Activated T-helper 1 cell treated with anti-CD3 and anti-CD28 coated beads, Interleukin-12 subunit alpha, Interleukin-12 subunit beta, Interleukin-2, Interleukin-4 antibody, amounts not matched to agents 30 ng/mL and 10 ng/mL and 1 ng/mL, durations not matched to agents 14 hours and 24 hours and 36 hours (primary cell): ENCODE measurements at regions of chr13 and their contacts with region 1.

Region 1: GRCh38 chr13:50081679-50082425 is 66.6 kb downstream of the KCNRG start:
- DNase-seq: peak; percentile 99
- H3K4me3 Mint-ChIP-seq: peak overlapping the region; percentile 97
- H3K27ac Mint-ChIP-seq: peak overlapping the region; percentile 100
- H3K4me1 Mint-ChIP-seq: peaks cover 48% of the 10 kb centered on the region
- H3K27me3 Mint-ChIP-seq: no peaks in the 10 kb centered on the region

Region 2: GRCh38 chr13:49792550-49793324 is 289.1 kb before region 1 on chr13 and contains the start of gene KPNA3:
- intact Hi-C with region 1: loop called (anchors 5 kb)
- DNase-seq: peak; percentile 93
- H3K4me3 Mint-ChIP-seq: peak within 1 kb of the TSS; percentile 96
- H3K27ac Mint-ChIP-seq: peak within 1 kb of the TSS; percentile 97
- H3K4me1 Mint-ChIP-seq: peaks cover 30% of the 10 kb centered on the region
- H3K27me3 Mint-ChIP-seq: peaks cover 6% of the 10 kb centered on the region
- total RNA-seq, gene KPNA3: 54.7 and 55.0 TPM in 2 replicates

Region 3: DNA sequence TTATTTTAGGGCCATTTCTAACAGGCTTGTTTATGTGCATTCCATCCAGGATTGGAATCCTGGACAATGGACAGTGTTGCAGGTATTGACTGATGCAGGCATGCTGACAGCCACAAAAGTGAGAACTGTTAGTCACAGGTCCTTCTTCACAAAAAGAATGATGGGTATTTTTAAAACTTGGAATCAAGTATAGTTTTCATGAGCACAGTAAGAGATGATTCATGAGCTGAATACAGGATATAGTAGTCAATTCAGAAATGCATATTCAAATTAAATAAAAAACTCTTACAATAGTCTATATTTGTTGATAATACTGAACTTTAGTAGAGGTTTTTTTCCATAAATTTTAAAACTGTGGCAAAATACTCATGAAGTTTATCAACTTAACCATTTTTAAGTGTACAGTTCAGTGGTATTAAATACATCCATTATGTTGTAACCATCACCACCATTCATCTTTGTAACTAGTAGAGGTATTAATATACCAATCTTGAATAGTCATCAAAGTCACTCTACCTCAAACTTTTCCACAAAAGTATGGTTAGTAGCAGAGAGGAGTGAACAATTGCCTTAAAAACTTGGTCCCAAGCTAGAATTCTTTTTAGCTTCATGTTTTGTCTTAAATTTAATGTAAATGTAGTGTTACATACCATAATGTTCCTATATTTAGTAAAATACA is 12.9 kb after region 1 on chr13:
- intact Hi-C with region 1: loop called (anchors 1 kb)
- DNase-seq: no peak
- H3K4me3 Mint-ChIP-seq: no peak overlapping the region
- H3K27ac Mint-ChIP-seq: no peak overlapping the region
- H3K4me1 Mint-ChIP-seq: peaks cover 10% of the 10 kb centered on the region
- H3K27me3 Mint-ChIP-seq: no peaks in the 10 kb centered on the region

Region 4: GRCh38 chr13:50236898-50237318 is 155.1 kb after region 1 on chr13:
- intact Hi-C with region 1: loop called (anchors 2 kb)
- DNase-seq: peak; percentile 45
- H3K4me3 Mint-ChIP-seq: peak overlapping the region; percentile 27
- H3K27ac Mint-ChIP-seq: peak overlapping the region; percentile 78
- H3K4me1 Mint-ChIP-seq: peaks cover 59% of the 10 kb centered on the region
- H3K27me3 Mint-ChIP-seq: peaks cover 22% of the 10 kb centered on the region

Region 5: DNA sequence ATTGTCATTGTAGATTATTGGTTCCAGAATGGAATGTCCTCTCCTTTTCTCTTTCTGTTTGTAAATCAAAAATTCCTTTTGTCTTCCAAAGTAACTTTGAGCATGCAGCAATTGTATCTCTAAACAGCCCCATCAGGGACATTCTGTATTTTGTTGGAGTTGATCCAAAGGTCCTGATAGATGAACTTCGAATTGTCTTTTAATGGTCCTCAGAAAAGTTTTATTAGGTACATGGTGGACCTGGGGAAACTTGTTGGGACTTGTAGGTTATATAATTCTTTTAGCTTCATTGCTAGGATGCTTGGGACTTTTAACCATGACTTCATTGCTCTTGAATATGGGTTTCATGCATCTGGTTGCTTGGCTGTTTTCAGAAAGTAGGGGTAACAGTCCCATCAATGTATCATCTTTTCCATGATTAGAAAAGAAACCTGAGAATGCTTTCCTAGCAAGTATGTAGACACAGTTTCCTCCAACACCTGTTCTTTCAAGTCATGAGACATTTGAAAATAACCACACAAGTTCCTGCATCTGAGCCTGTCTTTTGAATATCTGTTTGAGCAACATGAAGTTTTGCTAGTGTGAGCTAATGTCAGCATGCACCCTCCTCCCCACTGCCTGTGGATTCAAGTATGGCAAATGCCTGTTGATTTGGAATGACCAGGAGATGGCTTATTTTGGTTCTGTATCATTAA is 346.5 kb after region 1 on chr13:
- intact Hi-C with region 1: loop called (anchors 2 kb)
- DNase-seq: no peak
- H3K4me3 Mint-ChIP-seq: no peak overlapping the region
- H3K27ac Mint-ChIP-seq: peak overlapping the region; percentile 56
- H3K4me1 Mint-ChIP-seq: peaks cover 11% of the 10 kb centered on the region
- H3K27me3 Mint-ChIP-seq: peaks cover 5% of the 10 kb centered on the region

Region 6: DNA sequence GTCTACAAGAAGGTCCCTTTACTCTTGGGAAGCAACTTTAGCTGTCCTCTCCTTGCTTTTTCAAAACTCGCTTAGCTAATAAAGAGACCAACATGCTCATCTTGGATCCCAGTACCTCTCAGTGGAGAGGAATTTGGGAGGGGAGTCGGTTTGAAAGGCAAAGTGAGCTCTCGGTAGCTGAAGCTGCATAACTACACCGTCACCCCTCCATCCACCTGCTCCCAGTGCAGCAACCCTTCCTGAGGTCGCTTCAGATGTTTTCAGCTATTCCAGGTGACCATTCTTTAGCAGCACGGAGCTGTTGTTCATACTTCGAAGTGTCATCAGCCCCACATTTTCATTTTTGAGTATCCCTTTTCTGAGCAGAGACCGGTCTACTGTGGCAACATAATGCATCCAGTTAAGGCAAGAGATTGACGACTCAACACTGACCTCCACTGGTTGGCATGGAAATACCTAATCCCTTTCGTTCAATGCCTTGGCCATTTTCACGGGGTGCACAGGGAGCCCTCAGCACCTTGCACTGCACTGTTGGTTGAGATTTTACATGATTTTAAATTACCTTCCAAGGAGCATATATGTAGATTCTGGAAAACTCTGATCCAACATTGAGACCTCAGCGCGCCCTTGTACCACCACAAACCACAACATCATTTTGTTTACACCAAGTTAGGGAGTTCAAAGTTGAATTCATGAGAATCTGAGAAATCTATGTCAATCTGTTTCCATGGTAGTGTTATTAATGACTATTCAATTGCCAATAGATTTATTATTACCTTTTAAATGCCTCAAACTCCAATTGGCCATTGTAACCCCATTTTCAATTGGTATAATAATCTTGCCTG is 719.5 kb after region 1 on chr13:
- intact Hi-C with region 1: loop called (anchors 1 kb)
- DNase-seq: peak; percentile 50
- H3K4me3 Mint-ChIP-seq: no peak overlapping the region
- H3K27ac Mint-ChIP-seq: no peak overlapping the region
- H3K4me1 Mint-ChIP-seq: peaks cover 25% of the 10 kb centered on the region
- H3K27me3 Mint-ChIP-seq: no peaks in the 10 kb centered on the region

Region 7: DNA sequence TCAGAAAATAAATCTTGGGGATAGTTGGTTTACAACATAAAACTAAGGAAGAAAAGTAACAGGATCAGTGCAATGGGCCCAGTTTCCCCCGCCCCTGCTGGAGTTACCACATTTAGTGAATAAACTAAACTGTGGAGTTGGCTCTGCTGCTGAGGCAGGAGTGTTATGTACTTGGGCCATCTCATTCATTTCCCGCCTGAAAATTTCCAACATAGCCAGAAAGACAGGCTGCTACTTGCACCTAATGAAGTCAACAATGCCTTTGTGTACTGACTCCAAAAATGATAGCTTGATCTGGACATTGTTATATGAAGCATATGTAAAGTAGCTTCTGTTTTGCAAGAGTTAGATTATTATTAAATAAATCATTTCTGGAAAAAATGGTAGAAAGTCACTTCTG is 819.8 kb after region 1 on chr13:
- intact Hi-C with region 1: no loop called
- DNase-seq: no peak
- H3K4me3 Mint-ChIP-seq: no peak overlapping the region
- H3K27ac Mint-ChIP-seq: no peak overlapping the region
- H3K4me1 Mint-ChIP-seq: peaks cover 6% of the 10 kb centered on the region
- H3K27me3 Mint-ChIP-seq: no peaks in the 10 kb centered on the region

Region 8: DNA sequence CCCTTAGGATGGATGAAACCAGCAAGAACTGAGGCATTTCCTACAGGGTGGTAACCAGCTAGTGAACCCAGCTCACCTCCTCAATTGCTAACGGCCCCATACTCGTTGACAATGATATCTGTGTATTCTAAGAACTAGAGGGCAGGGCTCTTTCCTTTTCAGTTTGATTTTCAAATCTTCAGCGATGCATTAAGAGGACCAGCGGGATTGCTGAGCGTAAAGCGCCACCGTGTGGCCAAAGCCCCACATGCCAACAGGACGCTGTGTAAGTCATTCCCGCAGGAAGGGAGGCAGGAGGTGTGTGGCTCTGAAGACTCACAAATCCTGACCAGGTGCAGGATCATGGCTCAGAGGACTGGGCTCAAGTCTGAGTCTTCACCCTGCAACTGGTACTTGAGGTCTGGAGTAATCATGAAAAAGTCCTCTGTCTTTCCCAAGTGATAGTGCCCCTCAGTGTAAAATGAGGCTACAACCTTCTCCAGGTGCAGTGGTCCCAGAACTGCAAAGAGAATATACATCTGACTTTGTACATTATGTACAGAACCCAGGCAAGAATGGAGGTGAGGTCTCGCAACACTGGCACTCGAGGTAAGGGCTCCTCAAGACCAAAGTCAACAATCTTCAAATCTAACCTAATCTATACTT is 988.3 kb after region 1 on chr13:
- intact Hi-C with region 1: loop called (anchors 10 kb)
- DNase-seq: peak; percentile 70
- H3K4me3 Mint-ChIP-seq: no peak overlapping the region
- H3K27ac Mint-ChIP-seq: no peak overlapping the region
- H3K4me1 Mint-ChIP-seq: peaks cover 14% of the 10 kb centered on the region
- H3K27me3 Mint-ChIP-seq: peaks cover 11% of the 10 kb centered on the region